Caki2 (cell line): ENCODE measurements at regions of chr3 and their contacts with region 1.

Region 1: DNA sequence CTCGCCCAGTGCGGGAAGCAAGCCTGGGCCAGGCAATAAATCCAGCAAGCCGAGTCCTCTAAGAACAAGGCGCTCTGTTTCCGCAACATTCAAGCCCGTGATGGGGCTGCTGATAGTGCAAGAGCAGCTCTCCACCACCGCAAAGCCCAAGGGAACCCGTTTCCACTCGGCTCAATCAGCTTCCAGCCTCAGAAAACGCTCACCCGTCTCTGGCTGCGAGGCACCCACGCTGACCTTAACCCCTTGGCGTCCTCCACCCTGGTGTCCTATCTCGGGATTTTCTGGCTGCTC is 17.8 kb downstream of the SPATA12 start:
- DNase-seq: no peak

Region 2: GRCh38 chr3:56988458-56989168 is 89.7 kb before region 1 on chr3:
- in situ Hi-C with region 1: loop called (anchors 25 kb)
- DNase-seq: peak; percentile 47

Region 3: DNA sequence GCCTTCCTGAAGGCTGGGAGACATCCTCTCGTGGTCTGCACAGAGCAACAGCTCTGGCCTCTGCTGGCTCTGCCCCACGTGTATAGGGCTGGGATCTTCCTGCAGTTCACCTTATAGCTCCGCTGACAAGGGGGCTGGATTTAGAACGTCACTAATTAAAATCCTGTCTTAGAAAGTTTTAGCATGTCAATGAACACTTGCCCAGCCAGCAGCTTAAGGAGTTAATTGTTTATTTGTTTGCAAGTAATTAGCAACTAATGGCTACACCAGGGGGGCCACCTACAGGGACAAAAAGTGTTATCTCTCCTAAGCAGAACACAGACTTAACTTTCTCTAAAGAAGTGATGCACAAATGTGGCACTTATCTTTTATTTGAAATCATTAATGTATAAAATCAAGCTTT is 121.6 kb after region 1 on chr3 and contains the start of gene HESX1:
- in situ Hi-C with region 1: no loop called
- DNase-seq: no peak
- total RNA-seq, gene HESX1: 0.84 and 1.7 TPM in 2 replicates